ENCODE measurements at regions of chr2 and their contacts with region 1.

Region 1: DNA sequence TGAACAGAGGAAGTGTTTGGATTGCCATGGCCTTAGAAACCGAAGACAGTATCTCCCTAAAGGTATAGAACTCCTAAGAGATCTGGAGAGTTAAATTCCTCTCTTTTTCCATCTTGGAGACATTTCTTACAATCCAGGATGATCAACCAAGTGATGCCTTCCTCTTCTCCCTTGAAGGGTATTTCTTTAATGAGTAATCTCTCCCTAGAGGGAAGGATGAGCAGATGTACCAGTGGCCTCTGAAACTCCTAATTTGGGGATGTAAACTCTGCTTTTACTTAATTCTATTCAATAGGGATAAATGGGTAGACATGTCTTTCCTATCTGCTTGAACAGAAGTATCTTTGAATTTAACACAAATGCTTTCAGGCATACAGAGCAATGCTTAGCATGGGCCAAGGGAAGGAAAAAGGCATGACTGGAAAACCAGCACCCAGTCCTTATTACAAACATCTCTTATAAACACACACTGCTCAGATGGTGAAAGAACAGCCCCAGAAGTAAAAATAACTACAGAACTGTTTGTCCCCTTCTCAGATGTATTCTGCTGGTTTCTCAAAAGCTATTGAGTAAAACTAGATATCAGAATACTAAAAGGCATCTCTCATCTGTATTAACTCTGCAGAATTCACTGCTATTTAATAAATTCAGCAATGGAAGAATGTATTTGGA is 4.7 kb upstream of the THNSL2 start:
- DNase-seq: no peak
- ATAC-seq: no peak
- H3K4me3 ChIP-seq: no peak overlapping the region
- H3K4me3 Mint-ChIP-seq: no peak overlapping the region
- H3K27ac ChIP-seq: no peak overlapping the region
- H3K27ac Mint-ChIP-seq: no peak overlapping the region
- H3K4me1 ChIP-seq: no peaks in the 10 kb centered on the region
- H3K4me1 Mint-ChIP-seq: no peaks in the 10 kb centered on the region
- H3K27me3 ChIP-seq: no peaks in the 10 kb centered on the region
- H3K27me3 Mint-ChIP-seq: peaks cover 8% of the 10 kb centered on the region
- CTCF ChIP-seq: no peak

Region 2: DNA sequence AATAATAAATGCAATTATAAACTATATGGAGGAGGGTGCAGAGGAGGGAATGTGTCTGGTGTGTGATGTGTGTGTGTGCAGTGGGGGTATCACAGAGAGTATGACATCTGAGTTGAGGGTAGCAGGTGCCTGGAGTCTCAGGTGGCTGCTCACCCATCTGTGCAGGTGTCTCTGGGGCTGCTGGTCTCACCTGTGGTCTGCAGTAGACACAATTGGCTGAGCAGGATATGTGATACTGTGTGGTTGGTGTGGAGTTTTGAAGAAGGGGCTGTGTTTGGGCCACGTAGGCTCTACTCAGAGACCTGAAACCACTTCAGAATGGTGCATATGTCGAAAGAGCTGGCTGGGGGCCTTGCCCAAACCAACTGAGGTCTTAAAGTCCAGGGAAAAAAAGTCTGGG is 54.6 kb before region 1 on chr2:
- CTCF ChIA-PET with region 1: no interaction called
- POLR2A ChIA-PET with region 1: no interaction called
- intact Hi-C with region 1: no loop called
- DNase-seq: no peak
- ATAC-seq: no peak
- H3K4me3 ChIP-seq: no peak overlapping the region
- H3K4me3 Mint-ChIP-seq: no peak overlapping the region
- H3K27ac ChIP-seq: no peak overlapping the region
- H3K27ac Mint-ChIP-seq: no peak overlapping the region
- H3K4me1 ChIP-seq: no peaks in the 10 kb centered on the region
- H3K4me1 Mint-ChIP-seq: no peaks in the 10 kb centered on the region
- H3K27me3 ChIP-seq: no peaks in the 10 kb centered on the region
- H3K27me3 Mint-ChIP-seq: peaks cover 5% of the 10 kb centered on the region
- CTCF ChIP-seq: no peak

Region 3: GRCh38 chr2:88146590-88146989 is 18.9 kb before region 1 on chr2:
- CTCF ChIA-PET with region 1: interaction called, 3 read pairs
- POLR2A ChIA-PET with region 1: no interaction called
- intact Hi-C with region 1: loop called in 1 of 2 experiments (anchors 2 kb)
- DNase-seq: no peak
- ATAC-seq: no peak
- H3K4me3 ChIP-seq: no peak overlapping the region
- H3K4me3 Mint-ChIP-seq: no peak overlapping the region
- H3K27ac ChIP-seq: no peak overlapping the region
- H3K27ac Mint-ChIP-seq: no peak overlapping the region
- H3K4me1 ChIP-seq: no peaks in the 10 kb centered on the region
- H3K4me1 Mint-ChIP-seq: no peaks in the 10 kb centered on the region
- H3K27me3 ChIP-seq: peaks cover 0 to 2% of the 10 kb centered on the region in 2 experiments
- H3K27me3 Mint-ChIP-seq: peaks cover 20% of the 10 kb centered on the region
- CTCF ChIP-seq: no peak

Region 4: GRCh38 chr2:88281302-88282217 is 116.1 kb after region 1 on chr2:
- CTCF ChIA-PET with region 1: no interaction called
- POLR2A ChIA-PET with region 1: no interaction called
- intact Hi-C with region 1: no loop called
- DNase-seq: peak in 2 of 9 experiments; percentile 9 to 25
- ATAC-seq: no peak
- H3K4me3 ChIP-seq: no peak overlapping the region
- H3K4me3 Mint-ChIP-seq: no peak overlapping the region
- H3K27ac ChIP-seq: no peak overlapping the region
- H3K27ac Mint-ChIP-seq: no peak overlapping the region
- H3K4me1 ChIP-seq: no peaks in the 10 kb centered on the region
- H3K4me1 Mint-ChIP-seq: peaks cover 3% of the 10 kb centered on the region
- H3K27me3 ChIP-seq: no peaks in the 10 kb centered on the region
- H3K27me3 Mint-ChIP-seq: peaks cover 22% of the 10 kb centered on the region
- CTCF ChIP-seq: no peak